ENCODE measurements at regions of chr9 and their contacts with region 1.

Region 1: DNA sequence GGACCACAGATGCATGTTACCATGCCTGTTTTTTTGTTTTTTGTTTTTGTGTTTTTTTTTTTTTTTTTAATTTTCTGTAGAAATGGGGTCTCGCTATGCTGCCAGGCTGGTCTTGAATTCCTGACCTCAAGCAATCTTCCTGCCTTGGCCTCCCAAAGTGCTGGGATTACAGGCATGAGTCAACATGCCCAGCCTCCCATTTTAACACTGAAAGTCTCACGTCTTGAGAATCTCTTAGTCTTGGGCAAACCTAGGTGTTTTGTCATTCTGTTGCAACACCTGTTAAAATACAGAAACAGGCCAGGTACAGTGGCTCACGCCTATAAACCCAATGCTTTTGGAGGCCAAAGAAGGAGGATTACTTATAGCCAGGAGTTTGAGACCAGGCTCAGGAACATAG is 599.0 kb downstream of the TLR4 start:
- DNase-seq: no peak
- H3K4me3 ChIP-seq: no peak overlapping the region
- H3K27ac ChIP-seq: no peak overlapping the region
- H3K4me1 ChIP-seq: no peaks in the 10 kb centered on the region
- H3K27me3 ChIP-seq: no peaks in the 10 kb centered on the region
- CTCF ChIP-seq: no peak
- POLR2A ChIP-seq: no peak

Region 2: DNA sequence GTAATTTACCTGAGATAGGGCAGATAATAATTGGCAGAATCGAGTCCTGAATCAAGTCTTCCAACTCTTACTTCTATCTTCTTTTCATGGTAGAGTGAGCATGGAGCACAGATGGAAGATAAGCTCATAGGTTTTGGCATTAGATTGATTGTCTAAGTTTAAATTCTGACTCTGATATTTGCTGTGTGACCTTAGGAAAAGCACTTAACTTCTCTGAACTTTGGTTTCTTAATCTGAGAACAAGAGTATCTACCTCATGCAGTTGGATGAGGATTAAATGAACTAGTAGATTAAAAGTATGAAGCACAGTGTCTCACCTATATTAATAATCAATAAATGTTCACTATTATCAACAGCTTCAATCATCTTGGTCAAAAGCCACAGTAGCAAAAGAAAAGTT is 878.9 kb before region 1 on chr9:
- intact Hi-C with region 1: loop called (anchors 5 kb)
- DNase-seq: no peak
- H3K4me3 ChIP-seq: no peak overlapping the region
- H3K27ac ChIP-seq: no peak overlapping the region
- H3K4me1 ChIP-seq: no peaks in the 10 kb centered on the region
- H3K27me3 ChIP-seq: peaks cover 0 to 6% of the 10 kb centered on the region in 2 donors
- CTCF ChIP-seq: no peak
- POLR2A ChIP-seq: no peak

Region 3: DNA sequence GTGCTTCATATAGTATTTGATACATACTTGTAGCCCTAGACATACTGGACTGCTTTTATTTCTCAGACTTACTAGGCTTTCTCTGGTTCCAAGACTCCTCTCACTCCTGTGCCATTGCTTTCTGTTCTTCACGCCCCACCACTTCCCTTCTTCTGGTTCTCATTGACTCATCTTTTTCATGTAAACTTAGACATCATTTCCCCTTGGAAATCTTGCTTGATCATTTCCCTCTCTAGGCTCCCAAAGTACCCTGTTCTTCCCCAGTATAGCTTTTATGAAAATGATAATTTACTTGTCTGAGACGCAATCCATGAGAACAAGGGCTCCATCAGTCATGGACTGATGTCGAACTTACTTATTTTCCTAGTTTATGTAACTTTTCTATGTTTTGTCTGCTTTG is 515.4 kb before region 1 on chr9:
- intact Hi-C with region 1: no loop called
- DNase-seq: no peak
- H3K4me3 ChIP-seq: no peak overlapping the region
- H3K27ac ChIP-seq: no peak overlapping the region
- H3K4me1 ChIP-seq: no peaks in the 10 kb centered on the region
- H3K27me3 ChIP-seq: no peaks in the 10 kb centered on the region
- CTCF ChIP-seq: no peak
- POLR2A ChIP-seq: no peak

Measured in breast epithelium (tissue), 4 donors.